ENCODE measurements at regions of chr19 and their contacts with region 1.

Region 1: GRCh38 chr19:57578487-57579205 is at the start of gene ZNF416:
- DNase-seq: peak; percentile 97
- H3K4me3 ChIP-seq: peak within 1 kb of the TSS; percentile 80 to 90 (median 84)
- H3K27ac ChIP-seq: peak within 1 kb of the TSS; percentile 28
- H3K4me1 ChIP-seq: peaks cover 3% of the 10 kb centered on the region
- H3K27me3 ChIP-seq: no peaks in the 10 kb centered on the region
- CTCF ChIP-seq: peak in 1 of 2 donors; percentile 32
- total RNA-seq, gene ZNF416: 5.3 to 6.3 TPM

Region 2: DNA sequence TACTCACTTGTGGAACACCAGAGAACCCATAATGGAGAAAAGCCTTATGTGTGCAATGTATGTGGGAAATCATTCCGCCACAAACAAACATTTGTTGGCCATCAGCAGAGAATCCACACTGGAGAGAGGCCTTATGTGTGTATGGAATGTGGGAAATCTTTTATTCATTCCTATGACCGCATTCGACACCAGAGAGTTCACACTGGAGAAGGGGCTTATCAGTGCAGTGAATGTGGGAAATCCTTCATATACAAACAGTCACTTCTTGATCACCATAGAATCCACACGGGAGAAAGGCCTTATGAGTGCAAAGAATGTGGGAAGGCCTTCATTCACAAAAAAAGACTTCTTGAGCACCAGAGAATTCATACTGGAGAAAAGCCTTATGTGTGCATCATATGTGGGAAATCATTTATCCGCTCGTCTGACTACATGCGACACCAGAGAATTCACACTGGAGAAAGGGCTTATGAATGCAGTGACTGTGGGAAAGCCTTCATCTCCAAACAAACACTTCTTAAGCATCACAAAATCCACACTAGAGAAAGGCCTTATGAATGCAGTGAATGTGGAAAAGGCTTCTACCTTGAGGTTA is 40.6 kb before region 1 on chr19:
- CTCF ChIA-PET with region 1: no interaction called
- dilution Hi-C with region 1: no loop called
- in situ Hi-C with region 1: no loop called
- intact Hi-C with region 1: no loop called
- DNase-seq: no peak
- H3K4me3 ChIP-seq: no peak overlapping the region
- H3K27ac ChIP-seq: no peak overlapping the region
- H3K4me1 ChIP-seq: no peaks in the 10 kb centered on the region
- H3K27me3 ChIP-seq: no peaks in the 10 kb centered on the region
- CTCF ChIP-seq: no peak

Region 3: GRCh38 chr19:57682226-57682766 is 103.7 kb after region 1 on chr19:
- CTCF ChIA-PET with region 1: no interaction called
- dilution Hi-C with region 1: no loop called
- in situ Hi-C with region 1: no loop called
- intact Hi-C with region 1: loop called (anchors 5 kb)
- DNase-seq: no peak
- H3K4me3 ChIP-seq: peak overlapping the region; percentile 65 to 81 (median 75)
- H3K27ac ChIP-seq: peak overlapping the region; percentile 16
- H3K4me1 ChIP-seq: peaks cover 9% of the 10 kb centered on the region
- H3K27me3 ChIP-seq: no peaks in the 10 kb centered on the region
- CTCF ChIP-seq: no peak

Region 4: DNA sequence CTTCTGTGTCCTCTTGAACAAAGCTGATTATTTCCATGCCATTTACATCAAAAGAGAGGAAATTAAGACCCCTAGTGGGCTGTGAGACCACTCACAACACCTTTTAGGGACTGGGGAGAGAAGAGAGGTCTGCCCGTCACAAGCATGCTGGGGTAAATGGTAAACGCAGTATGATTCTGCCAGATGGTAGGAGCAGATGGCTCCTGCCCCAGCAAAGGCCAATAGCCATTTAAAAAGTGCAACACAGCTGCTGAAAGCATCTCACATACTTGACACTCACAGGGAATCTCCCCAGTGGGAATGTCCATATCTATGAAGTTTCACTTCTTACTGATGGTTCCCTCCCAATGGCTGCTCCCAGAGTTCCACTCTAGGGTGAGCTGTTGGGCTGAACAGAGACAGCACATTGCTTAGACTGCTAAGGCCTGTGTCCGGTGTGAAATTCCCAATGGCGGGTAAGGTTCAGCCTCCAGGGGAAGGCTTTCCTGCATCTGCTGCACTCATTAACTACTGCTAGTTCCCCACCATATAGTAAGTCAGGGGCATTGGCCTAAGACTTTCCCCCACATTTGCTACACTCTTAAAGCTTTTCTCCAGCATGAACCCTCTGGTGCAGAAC is 141.4 kb after region 1 on chr19:
- CTCF ChIA-PET with region 1: no interaction called
- dilution Hi-C with region 1: no loop called
- in situ Hi-C with region 1: no loop called
- intact Hi-C with region 1: loop called (anchors 5 kb)
- DNase-seq: no peak
- H3K4me3 ChIP-seq: no peak overlapping the region
- H3K27ac ChIP-seq: no peak overlapping the region
- H3K4me1 ChIP-seq: no peaks in the 10 kb centered on the region
- H3K27me3 ChIP-seq: no peaks in the 10 kb centered on the region
- CTCF ChIP-seq: no peak

Region 5: DNA sequence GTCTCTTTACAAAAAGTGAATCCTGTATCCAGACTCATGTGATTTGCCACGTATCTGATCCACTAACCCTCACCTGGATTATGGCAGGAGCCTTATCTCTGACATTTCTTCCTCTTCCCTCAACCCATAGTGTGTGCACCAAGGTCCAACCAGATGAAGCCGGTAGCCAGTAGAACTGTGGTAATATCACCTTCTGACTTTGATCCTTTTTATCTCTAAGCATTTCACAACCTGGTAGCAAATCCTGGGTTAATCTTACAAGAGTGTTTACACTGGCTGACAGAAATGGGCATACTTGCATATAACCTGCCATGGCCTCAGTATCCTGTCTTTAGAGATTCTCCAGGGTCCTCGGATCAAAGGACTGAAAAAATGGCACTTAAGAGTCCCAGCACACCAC is 335.9 kb after region 1 on chr19:
- CTCF ChIA-PET with region 1: no interaction called
- dilution Hi-C with region 1: no loop called
- in situ Hi-C with region 1: no loop called
- intact Hi-C with region 1: loop called (anchors 10 kb)
- DNase-seq: no peak
- H3K4me3 ChIP-seq: no peak overlapping the region
- H3K27ac ChIP-seq: no peak overlapping the region
- H3K4me1 ChIP-seq: no peaks in the 10 kb centered on the region
- H3K27me3 ChIP-seq: no peaks in the 10 kb centered on the region
- CTCF ChIP-seq: no peak